AG04450 (cell line): ENCODE measurements at regions of chr3 and their contacts with region 1.

Region 1: DNA sequence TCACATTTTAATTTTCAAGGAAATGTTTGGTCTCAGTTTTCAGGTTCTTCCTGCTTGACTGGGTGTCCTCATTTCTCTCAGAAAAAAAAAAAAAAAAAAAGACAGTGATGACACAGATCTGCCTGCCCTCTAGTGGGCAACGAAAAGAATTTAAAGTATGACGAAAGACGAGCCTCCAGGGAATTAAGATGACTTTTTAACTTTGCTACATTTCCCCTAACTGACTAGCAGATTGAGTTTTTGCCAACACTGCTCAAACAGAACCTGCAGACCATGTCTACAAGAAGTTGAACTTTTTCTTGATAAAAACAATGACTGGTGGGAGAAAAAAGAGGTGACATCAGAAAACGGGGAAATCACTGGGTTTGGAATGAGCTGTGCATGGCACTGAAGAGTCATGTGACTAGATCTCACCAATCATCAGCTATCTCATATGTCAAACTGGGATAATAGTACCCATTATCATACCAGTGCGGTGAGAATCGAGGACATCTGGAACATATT is 40.8 kb downstream of the EOMES start:
- DNase-seq: peak; percentile 59
- H3K4me3 ChIP-seq: no peak overlapping the region
- H3K27ac ChIP-seq: no peak overlapping the region
- H3K27me3 ChIP-seq: no peaks in the 10 kb centered on the region
- CTCF ChIP-seq: peak; percentile 67

Region 2: GRCh38 chr3:27134165-27134796 is 547.0 kb before region 1 on chr3:
- CTCF ChIA-PET with region 1: interaction called, 20 read pairs
- POLR2A ChIA-PET with region 1: no interaction called
- DNase-seq: peak; percentile 42
- H3K4me3 ChIP-seq: no peak overlapping the region
- H3K27ac ChIP-seq: no peak overlapping the region
- H3K27me3 ChIP-seq: no peaks in the 10 kb centered on the region
- CTCF ChIP-seq: peak; percentile 93

Region 3: DNA sequence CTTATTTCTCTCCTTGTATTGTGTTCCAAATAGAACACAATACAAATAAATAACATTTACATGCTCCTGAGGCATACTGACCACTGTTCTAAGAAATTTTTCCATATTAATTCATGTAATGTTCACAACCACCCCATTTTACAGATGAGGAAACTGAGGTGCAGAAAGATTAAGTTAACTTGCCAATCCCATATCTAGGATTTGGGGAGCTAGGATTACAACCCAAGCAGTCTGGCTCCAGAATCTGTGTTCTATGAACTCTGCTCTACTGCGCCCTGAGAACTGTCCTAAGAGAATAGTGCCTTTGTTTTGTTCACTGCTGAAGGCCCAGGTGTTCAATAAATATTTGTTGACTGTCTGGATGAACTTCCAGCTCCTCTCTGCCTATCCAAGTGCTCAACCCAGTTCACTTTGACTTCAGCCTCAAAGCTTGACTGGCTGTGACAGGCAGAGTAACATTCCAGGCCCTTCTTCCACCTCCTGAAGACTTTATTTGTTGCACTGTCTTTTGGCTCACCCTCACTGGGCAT is 315.2 kb before region 1 on chr3:
- CTCF ChIA-PET with region 1: interaction called, 10 read pairs
- POLR2A ChIA-PET with region 1: interaction called, 3 read pairs
- DNase-seq: no peak
- H3K4me3 ChIP-seq: no peak overlapping the region
- H3K27ac ChIP-seq: no peak overlapping the region
- H3K27me3 ChIP-seq: no peaks in the 10 kb centered on the region
- CTCF ChIP-seq: no peak

Region 4: DNA sequence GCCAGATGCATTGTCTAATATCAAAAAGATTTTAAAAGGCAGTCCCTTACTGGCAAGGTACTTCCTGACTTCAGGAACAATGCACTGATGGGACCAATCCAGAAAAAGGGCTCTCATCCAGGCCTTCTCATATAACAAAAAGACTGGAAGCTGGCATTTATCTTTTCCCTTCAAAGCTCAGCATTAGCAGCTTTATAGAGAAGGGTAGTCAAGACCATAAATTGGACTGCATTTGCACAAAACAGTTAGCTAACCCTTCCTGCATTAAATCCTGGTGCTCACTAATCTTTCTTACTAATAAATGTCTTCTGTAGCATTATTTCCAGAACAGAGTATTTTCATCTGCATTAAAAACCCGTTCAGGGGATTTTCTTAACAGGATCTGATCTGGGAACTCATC is 266.1 kb before region 1 on chr3:
- CTCF ChIA-PET with region 1: interaction called, 18 read pairs
- POLR2A ChIA-PET with region 1: no interaction called
- DNase-seq: no peak
- H3K4me3 ChIP-seq: no peak overlapping the region
- H3K27ac ChIP-seq: no peak overlapping the region
- H3K27me3 ChIP-seq: no peaks in the 10 kb centered on the region
- CTCF ChIP-seq: no peak

Region 5: DNA sequence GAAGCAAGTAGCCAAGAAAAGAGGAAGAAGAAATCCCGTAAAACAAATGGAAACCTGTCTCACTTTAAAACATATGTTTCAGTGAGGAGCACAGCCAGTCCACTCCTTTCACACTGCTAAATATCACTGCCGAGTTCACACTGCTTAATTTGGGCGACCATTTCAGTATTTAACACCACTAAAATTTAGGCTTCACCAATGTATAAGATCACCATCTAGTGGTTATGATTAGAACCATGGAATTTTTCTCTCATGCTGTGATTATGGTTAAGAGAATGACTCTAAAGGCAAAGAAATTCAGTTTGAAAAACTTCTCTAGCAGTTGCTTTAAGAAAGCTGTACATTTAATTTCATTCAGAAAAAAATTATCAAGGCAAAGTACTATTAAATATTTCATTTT is 213.8 kb before region 1 on chr3:
- CTCF ChIA-PET with region 1: interaction called, 36 read pairs
- POLR2A ChIA-PET with region 1: no interaction called
- DNase-seq: no peak
- H3K4me3 ChIP-seq: no peak overlapping the region
- H3K27ac ChIP-seq: no peak overlapping the region
- H3K27me3 ChIP-seq: no peaks in the 10 kb centered on the region
- CTCF ChIP-seq: peak; percentile 65

Region 6: GRCh38 chr3:27610800-27611525 is 70.3 kb before region 1 on chr3:
- CTCF ChIA-PET with region 1: no interaction called
- POLR2A ChIA-PET with region 1: no interaction called
- DNase-seq: no peak
- H3K4me3 ChIP-seq: no peak overlapping the region
- H3K27ac ChIP-seq: no peak overlapping the region
- H3K27me3 ChIP-seq: no peaks in the 10 kb centered on the region
- CTCF ChIP-seq: no peak

Region 7: DNA sequence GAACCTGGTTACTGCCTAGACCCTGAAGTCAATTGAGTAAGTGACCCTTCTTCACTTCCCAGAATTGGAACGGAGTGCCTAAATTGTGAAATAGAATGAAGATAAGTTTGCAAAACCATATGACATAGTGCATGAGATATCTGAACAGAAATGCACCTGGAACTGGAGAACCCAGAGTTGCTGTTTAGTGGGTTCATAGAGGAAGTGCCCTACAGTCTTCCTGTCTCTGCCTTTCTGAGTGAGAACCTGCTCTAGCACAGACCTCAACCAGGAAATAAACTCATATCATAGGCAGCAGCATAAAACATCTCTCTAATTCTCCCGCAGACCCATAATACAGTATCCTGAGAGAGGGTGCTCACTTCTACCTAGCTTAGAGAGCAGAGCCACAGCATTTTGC is 42.0 kb before region 1 on chr3:
- CTCF ChIA-PET with region 1: no interaction called
- POLR2A ChIA-PET with region 1: no interaction called
- DNase-seq: no peak
- H3K4me3 ChIP-seq: no peak overlapping the region
- H3K27ac ChIP-seq: no peak overlapping the region
- H3K27me3 ChIP-seq: no peaks in the 10 kb centered on the region
- CTCF ChIP-seq: no peak

Region 8: DNA sequence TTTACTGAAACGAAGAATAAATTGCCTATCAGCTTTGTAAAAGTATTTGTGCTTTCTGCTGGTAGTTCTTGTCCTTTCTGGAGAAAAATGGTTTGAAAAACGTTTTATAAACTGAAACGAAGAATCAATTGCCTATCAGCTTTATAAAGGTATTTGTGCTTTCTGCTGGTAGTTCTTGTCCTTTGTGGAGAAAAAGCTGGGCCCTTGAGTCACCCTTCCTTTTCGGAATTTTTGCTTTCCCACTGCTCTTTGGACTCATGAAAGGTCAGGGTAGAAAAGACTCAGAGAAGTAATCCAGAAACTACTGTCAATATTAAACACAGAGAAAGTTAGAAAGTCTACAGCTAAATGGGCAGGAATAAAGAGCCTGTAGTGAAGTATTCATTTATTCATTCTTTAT is 32.0 kb before region 1 on chr3:
- CTCF ChIA-PET with region 1: no interaction called
- POLR2A ChIA-PET with region 1: no interaction called
- DNase-seq: no peak
- H3K4me3 ChIP-seq: no peak overlapping the region
- H3K27ac ChIP-seq: no peak overlapping the region
- H3K27me3 ChIP-seq: no peaks in the 10 kb centered on the region
- CTCF ChIP-seq: no peak

Region 9: GRCh38 chr3:27670619-27671018 is 10.7 kb before region 1 on chr3:
- CTCF ChIA-PET with region 1: interaction called, 12 read pairs
- POLR2A ChIA-PET with region 1: no interaction called
- DNase-seq: no peak
- H3K4me3 ChIP-seq: no peak overlapping the region
- H3K27ac ChIP-seq: no peak overlapping the region
- H3K27me3 ChIP-seq: no peaks in the 10 kb centered on the region
- CTCF ChIP-seq: no peak

Region 10: DNA sequence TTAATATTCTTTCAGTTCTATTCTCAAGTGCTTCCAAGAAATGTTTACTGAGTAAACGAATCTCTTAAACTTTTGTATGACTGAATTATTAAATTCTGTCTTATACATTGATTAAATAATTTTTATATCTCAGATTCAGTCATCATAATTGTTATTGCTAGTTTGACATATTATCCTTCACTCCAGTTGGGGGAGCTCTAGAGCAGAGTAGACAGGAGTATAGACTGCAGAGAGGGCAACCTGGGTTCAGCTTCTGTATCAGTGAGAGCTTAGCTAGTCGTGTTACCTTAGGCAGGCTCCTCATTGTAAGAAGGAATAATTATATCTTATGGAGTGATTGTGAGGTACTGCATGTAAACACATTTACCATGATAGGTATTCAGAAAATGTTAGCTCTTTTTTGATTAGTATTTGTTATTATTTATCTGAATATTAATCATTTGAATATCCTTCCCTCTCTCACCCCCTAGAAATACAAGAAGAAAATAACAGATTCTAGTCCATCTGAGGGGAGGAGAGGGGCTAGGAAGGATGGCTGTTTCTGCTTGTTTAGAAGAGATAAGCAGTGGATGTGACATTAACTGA is 636.2 kb after region 1 on chr3:
- CTCF ChIA-PET with region 1: interaction called, 12 read pairs
- POLR2A ChIA-PET with region 1: no interaction called
- DNase-seq: no peak
- H3K4me3 ChIP-seq: no peak overlapping the region
- H3K27ac ChIP-seq: no peak overlapping the region
- H3K27me3 ChIP-seq: no peaks in the 10 kb centered on the region
- CTCF ChIP-seq: peak; percentile 65